ENCODE measurements at regions of chr2 and their contacts with region 1.

Region 1: GRCh38 chr2:161223139-161223732 is 63.0 kb downstream of the TANK start:
- DNase-seq: no peak
- H3K4me3 ChIP-seq: no peak overlapping the region
- H3K27ac ChIP-seq: no peak overlapping the region
- H3K4me1 ChIP-seq: peaks cover 0 to 9% (median 4%) of the 10 kb centered on the region in 4 donors
- H3K27me3 ChIP-seq: no peaks in the 10 kb centered on the region
- CTCF ChIP-seq: peak in 3 of 4 experiments; percentile 52 to 72 (median 69)
- EP300 ChIP-seq: no peak
- POLR2A ChIP-seq: no peak

Region 2: GRCh38 chr2:161044095-161044865 is 179.0 kb before region 1 on chr2:
- intact Hi-C with region 1: no loop called
- DNase-seq: no peak
- H3K4me3 ChIP-seq: no peak overlapping the region
- H3K27ac ChIP-seq: no peak overlapping the region
- H3K4me1 ChIP-seq: peaks cover 0 to 13% (median 0%) of the 10 kb centered on the region in 4 donors
- H3K27me3 ChIP-seq: no peaks in the 10 kb centered on the region
- CTCF ChIP-seq: no peak
- EP300 ChIP-seq: no peak
- POLR2A ChIP-seq: no peak

Region 3: GRCh38 chr2:161273038-161273760 is 50.0 kb after region 1 on chr2:
- intact Hi-C with region 1: loop called (anchors 1 kb)
- DNase-seq: no peak
- H3K4me3 ChIP-seq: no peak overlapping the region
- H3K27ac ChIP-seq: no peak overlapping the region
- H3K4me1 ChIP-seq: no peaks in the 10 kb centered on the region
- H3K27me3 ChIP-seq: no peaks in the 10 kb centered on the region
- CTCF ChIP-seq: peak; percentile 41 to 69 (median 46)
- EP300 ChIP-seq: no peak
- POLR2A ChIP-seq: no peak

Region 4: DNA sequence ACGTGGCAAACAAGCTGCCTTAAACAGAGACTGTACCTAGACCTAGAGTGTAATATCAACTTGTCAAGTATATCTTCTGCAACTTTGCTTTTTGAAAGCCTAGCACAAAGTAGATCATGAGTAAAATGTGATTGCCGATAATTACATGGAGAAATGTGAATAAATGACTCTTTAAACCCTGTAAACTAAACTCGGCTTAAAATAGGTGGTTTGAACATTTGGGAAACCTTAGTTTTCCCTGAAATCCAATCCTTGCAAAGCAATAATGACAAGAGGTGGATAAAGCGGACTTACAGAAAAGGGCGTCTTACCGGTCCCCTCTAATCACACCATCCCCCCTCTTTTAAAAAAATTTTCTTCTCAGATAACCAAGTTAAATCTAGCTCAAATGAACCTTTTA is 84.4 kb after region 1 on chr2:
- intact Hi-C with region 1: no loop called
- DNase-seq: no peak
- H3K4me3 ChIP-seq: peak overlapping the region; percentile 60 to 72 (median 68)
- H3K27ac ChIP-seq: peak overlapping the region; percentile 82 to 88 (median 85)
- H3K4me1 ChIP-seq: peaks cover 0 to 17% (median 12%) of the 10 kb centered on the region in 4 donors
- H3K27me3 ChIP-seq: no peaks in the 10 kb centered on the region
- CTCF ChIP-seq: no peak
- EP300 ChIP-seq: no peak
- POLR2A ChIP-seq: no peak